ENCODE measurements at regions of chr11 and their contacts with region 1.

Region 1: GRCh38 chr11:20647976-20648565 is 21.3 kb upstream of the NELL1 start:
- DNase-seq: peak; percentile 0
- H3K4me3 ChIP-seq: no peak overlapping the region
- H3K27me3 ChIP-seq: no peaks in the 10 kb centered on the region
- CTCF ChIP-seq: peak; percentile 87

Region 2: DNA sequence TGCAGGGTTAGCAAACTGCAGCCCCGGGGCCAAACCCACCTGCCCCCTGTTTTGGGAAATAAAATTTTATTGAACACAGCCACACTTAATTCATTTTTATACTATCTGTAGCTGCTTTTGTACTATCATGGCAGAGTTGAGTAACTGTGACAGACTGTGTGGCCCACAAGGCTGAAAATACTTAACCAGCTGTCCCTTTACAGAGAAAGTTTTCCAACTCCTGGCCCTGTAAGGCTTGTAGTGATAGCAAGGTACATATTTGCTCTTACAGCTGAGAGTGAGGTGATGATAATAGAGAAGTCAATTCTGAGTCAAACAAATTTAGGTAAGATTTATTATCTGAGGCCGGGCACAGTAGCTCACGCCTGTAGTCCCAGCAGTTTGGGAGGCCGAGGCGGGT is 136.1 kb before region 1 on chr11:
- CTCF ChIA-PET with region 1: no interaction called
- POLR2A ChIA-PET with region 1: no interaction called
- DNase-seq: no peak
- H3K4me3 ChIP-seq: no peak overlapping the region
- H3K27me3 ChIP-seq: no peaks in the 10 kb centered on the region
- CTCF ChIP-seq: no peak

Region 3: GRCh38 chr11:20658135-20658534 is 10.1 kb after region 1 on chr11:
- CTCF ChIA-PET with region 1: interaction called, 19 read pairs
- POLR2A ChIA-PET with region 1: no interaction called
- DNase-seq: no peak
- H3K4me3 ChIP-seq: no peak overlapping the region
- H3K27me3 ChIP-seq: peaks cover 1% of the 10 kb centered on the region; the same call in 1 of the 2 replicates
- CTCF ChIP-seq: no peak

Region 4: DNA sequence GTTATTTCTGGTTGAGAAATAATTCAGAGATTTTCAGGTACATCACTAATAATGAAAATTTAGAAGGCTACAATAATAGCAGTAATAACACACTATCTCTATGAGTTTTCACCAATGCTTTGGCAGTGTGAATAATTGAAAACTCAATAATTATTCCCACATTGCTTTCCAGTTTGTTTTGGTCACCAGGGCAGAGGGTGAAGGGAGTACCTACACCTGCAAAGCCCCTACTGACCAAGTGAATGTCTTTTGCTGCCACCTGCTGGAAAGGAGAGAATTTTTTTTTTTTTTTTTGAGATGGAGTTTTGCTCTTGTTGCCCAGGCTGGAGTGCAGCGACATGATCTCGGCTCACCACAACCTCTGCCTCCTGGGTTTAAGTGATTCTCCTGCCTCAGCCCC is 24.5 kb after region 1 on chr11:
- CTCF ChIA-PET with region 1: interaction called, 10 read pairs
- POLR2A ChIA-PET with region 1: no interaction called
- DNase-seq: no peak
- H3K4me3 ChIP-seq: no peak overlapping the region
- H3K27me3 ChIP-seq: peaks cover 24% of the 10 kb centered on the region
- CTCF ChIP-seq: peak; percentile 30; the same call in 1 of the 2 replicates

Region 5: GRCh38 chr11:22304337-22304961 is 1656.4 kb after region 1 on chr11:
- CTCF ChIA-PET with region 1: interaction called, 13 read pairs
- POLR2A ChIA-PET with region 1: no interaction called
- DNase-seq: peak; percentile 4
- H3K4me3 ChIP-seq: no peak overlapping the region
- H3K27me3 ChIP-seq: no peaks in the 10 kb centered on the region
- CTCF ChIP-seq: peak; percentile 56

Measured in BJ (cell line).